ENCODE measurements at regions of chr14 and their contacts with region 1.

Region 1: DNA sequence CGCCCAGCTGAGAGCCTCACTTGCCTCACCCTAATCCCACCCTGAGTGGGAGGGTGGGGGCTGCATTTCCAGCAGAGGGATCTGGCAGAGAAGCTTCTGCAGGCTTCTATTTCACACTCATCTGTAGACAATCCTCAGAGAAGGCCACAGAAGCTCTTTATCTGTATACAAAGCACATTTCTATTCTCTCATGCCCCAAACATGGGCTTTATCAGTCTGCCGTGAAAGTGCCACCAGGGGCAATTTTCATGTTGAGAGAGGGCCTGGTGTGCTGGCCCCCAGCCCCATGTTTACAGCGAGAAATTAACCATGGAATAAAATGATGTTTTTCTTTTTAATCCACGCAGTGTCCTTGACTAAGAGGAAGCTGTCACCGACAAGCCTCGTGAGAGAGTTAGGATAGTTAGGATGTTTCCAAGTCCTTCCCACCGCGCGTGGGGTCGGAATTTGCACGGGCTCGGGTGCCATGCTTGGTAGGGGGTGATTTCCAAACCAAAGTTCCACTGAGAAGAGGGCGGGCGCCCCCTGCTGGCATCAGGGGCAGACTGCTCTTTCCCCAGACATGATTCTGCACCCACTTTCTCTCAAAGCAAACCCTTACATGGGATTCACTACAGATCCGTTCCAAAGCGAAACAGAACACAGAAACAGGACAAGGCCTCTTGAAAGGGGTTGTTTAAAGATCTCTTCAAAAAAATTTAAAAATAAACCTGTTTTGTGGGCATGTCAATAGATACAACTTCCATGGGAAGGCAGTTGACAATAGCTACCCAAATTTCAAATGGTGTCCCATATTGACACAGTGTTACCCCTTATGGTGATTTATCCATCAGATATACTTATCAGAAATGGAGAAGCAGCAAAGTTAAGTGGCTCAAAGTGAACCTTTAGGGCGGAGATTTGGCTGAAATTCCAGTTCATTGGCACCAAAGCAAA is 19.4 kb downstream of the BDKRB1 start:
- DNase-seq: peak; percentile 90
- ATAC-seq: peak; percentile 72
- H3K4me3 ChIP-seq: no peak overlapping the region
- H3K27ac ChIP-seq: peak overlapping the region; percentile 94
- H3K4me1 ChIP-seq: peaks cover 23% of the 10 kb centered on the region
- H3K27me3 ChIP-seq: no peaks in the 10 kb centered on the region
- CTCF ChIP-seq: peak; percentile 99
- POLR2A ChIP-seq: peak; percentile 61
- RAD21 ChIP-seq: peak; percentile 98

Region 2: GRCh38 chr14:96001866-96002497 is 273.5 kb before region 1 on chr14:
- CTCF ChIA-PET with region 1: interaction called, 3 read pairs
- POLR2A ChIA-PET with region 1: no interaction called
- dilution Hi-C with region 1: no loop called
- in situ Hi-C with region 1: loop called (anchors 5 kb)
- intact Hi-C with region 1: loop called (anchors 1 kb)
- DNase-seq: peak; percentile 8
- ATAC-seq: peak; percentile 56
- H3K4me3 ChIP-seq: no peak overlapping the region
- H3K27ac ChIP-seq: no peak overlapping the region
- H3K4me1 ChIP-seq: no peaks in the 10 kb centered on the region
- H3K27me3 ChIP-seq: peaks cover 22% of the 10 kb centered on the region
- CTCF ChIP-seq: no peak
- POLR2A ChIP-seq: no peak
- RAD21 ChIP-seq: no peak

Region 3: DNA sequence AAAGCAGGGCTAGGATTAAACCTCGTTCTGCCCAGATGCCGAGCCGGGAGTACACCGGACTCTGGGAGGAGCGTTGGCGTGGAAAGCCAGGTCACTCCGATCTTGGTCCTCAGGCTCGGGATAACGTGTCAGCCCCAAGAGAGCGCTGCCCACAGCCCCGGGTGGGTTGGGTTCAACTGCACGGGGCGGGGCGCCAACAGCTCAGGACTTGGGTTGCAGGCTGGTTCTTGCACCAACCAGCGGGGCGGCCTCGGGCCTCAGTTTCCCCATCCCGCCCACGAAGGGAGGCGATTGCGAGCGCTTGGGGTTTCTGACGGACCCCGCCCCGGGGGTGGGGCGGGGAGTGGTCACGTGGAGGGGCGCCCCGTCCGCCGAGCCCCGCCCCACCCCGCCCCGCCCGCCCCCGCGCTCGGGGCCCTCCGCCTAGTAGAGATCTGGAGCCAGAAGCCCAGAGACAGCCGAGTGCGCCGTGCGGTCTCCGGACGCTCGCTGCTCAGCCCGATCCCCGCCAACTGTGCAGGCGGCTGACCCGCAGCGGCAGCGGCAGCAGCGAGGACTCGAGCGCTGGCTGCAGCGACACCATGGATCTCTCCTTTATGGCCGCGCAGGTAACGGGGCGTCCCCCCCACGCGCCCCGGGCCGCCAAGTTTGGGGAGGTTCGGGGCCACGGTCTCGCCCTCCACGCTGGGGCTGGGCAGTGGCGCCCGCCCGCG is 236.4 kb before region 1 on chr14 and contains the start of gene C14orf132:
- CTCF ChIA-PET with region 1: no interaction called
- POLR2A ChIA-PET with region 1: no interaction called
- dilution Hi-C with region 1: no loop called
- in situ Hi-C with region 1: no loop called
- intact Hi-C with region 1: loop called (anchors 1 kb)
- DNase-seq: peak; percentile 48
- ATAC-seq: peak; percentile 93
- H3K4me3 ChIP-seq: peak within 1 kb of the TSS; percentile 98
- H3K27ac ChIP-seq: peak within 1 kb of the TSS; percentile 68
- H3K4me1 ChIP-seq: peaks cover 12% of the 10 kb centered on the region; the same call in 1 of the 2 replicates
- H3K27me3 ChIP-seq: peaks cover 12% of the 10 kb centered on the region; the same call in 1 of the 2 replicates
- CTCF ChIP-seq: no peak
- POLR2A ChIP-seq: peak; percentile 91
- RAD21 ChIP-seq: no peak
- total RNA-seq, gene C14orf132: 6.3 and 6.9 TPM in 2 replicates

Region 4: DNA sequence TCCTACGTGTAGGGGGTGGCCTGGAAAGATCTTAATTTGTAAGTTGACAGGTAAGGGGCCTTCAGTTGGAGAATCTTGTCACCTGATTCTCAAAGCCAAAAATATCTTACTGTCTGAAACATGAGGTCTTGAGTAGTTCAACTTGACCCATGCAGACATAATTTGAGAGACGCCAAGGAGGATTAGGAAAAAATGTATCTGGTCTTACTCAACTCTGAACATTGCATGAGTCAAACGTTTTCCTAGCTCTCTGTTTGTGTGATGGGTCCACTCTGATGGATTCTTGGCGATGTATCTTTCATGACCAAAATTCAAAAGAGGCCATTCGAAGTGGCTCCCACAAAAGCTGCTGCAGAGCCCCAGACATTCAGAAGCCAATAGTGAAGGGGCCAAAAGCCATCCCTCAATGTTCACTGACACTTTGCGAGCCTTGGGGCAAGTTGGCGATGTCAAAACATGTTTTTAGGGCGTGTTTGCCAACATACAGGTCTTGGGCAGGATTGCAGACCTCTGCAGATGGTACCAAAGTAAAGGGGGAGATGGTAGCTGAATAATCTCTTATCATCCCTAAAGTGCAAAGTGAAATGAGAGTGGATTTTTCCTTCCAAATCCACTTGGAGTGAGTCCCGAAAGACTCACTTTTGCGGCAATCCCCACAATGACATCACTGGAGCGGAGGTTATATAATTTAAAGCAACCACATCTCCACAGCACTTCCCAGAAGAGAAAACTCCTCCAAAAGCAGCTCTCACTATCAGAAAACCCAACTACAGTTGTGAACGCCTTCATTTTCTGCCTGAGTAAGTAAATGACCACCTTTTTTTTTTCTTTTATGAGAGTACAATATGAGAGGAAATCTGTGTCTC is 19.7 kb before region 1 on chr14 and contains the start of gene BDKRB1:
- CTCF ChIA-PET with region 1: interaction called, 13 read pairs
- POLR2A ChIA-PET with region 1: interaction called, 4 read pairs
- dilution Hi-C with region 1: no loop called
- in situ Hi-C with region 1: no loop called
- intact Hi-C with region 1: no loop called
- DNase-seq: peak; percentile 96
- ATAC-seq: peak; percentile 24
- H3K4me3 ChIP-seq: peak within 1 kb of the TSS; percentile 59
- H3K27ac ChIP-seq: peak within 1 kb of the TSS; percentile 92
- H3K4me1 ChIP-seq: peaks cover 34% of the 10 kb centered on the region
- H3K27me3 ChIP-seq: no peaks in the 10 kb centered on the region
- CTCF ChIP-seq: no peak
- POLR2A ChIP-seq: peak; percentile 97
- RAD21 ChIP-seq: no peak
- total RNA-seq, gene BDKRB1: 51.4 and 56.5 TPM in 2 replicates

Measured in IMR-90 (cell line).